Activated CD4-positive, alpha-beta T cell treated with anti-CD3 and anti-CD28 coated beads for 36 hours (primary cell): ENCODE measurements at regions of chr1 and their contacts with region 1.

Region 1: DNA sequence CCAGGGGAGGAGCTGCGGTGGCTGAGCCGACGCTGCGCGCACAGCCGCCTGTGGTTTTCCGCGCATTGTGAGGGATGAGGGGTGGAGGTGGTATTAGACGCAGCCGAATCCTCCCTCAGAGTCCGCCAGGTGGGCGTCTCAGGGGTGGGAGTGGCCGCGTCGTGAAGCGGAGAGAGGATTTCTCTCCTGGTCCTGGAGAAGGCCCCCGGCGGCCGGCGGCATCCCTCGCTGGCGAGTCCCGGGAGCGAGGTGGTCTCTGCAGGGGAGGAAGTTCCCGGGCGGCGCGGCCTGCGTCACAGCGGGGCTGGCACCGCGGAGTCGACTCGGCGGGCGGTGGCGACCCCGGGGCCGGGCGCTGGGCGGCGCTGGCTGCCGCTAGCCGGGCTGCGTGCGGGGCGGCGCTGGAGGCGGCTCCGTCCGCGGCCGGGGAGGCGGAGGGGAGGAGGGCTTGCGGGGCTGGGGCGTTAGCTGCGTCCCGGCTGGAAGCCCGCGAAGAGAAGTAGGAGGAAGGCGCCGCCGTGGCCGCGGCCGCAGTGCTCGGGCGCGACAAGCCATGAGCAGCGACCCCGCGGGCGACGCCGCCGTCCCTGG is at the start of gene LRRC8C:
- DNase-seq: peak; percentile 93
- ATAC-seq: peak; percentile 77
- H3K4me3 Mint-ChIP-seq: peak within 1 kb of the TSS; percentile 96
- H3K27ac Mint-ChIP-seq: peak within 1 kb of the TSS; percentile 98
- H3K4me1 Mint-ChIP-seq: peaks cover 66% of the 10 kb centered on the region
- H3K27me3 Mint-ChIP-seq: no peaks in the 10 kb centered on the region
- total RNA-seq, gene LRRC8C: 31.5 to 37.1 TPM

Region 2: DNA sequence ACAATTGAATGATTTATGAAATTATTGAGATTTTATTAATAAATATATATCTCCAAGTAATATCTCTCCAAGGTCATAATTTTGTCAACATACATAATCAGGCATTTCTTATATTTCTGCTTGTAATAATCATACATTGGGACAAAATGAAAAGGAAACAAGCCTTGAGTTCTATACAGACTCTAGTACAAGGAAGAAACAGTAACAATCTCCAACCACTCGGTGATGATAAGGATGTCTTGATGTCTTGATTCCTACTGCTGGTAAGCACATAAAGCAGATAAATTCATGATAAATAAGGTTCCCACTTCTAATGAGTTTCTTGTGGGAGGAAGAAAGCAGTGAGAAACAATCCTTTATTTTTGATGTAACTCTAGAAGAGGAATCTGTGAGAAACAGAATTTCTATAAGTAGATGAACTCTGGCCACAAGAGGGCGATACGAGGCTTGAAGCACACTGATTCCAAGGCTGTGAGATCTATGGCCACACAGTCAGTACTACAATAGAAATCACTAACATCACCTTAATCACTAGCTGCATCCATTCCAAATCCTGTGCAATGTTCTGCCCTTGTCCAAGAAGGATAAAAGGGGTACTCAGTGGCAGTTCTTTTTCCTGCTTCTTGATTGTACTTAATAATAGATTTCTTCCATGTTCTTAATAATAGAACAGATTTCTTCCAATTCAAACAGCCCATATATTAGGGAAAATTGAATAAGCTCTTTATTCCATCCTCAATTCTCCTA is 149.6 kb before region 1 on chr1:
- CTCF ChIA-PET with region 1: interaction called, 8 read pairs
- POLR2A ChIA-PET with region 1: interaction called, 3 read pairs
- intact Hi-C with region 1: loop called in 1 of 2 experiments (anchors 2 kb)
- DNase-seq: peak; percentile 91
- ATAC-seq: peak; percentile 86
- H3K4me3 Mint-ChIP-seq: no peak overlapping the region
- H3K27ac Mint-ChIP-seq: no peak overlapping the region
- H3K4me1 Mint-ChIP-seq: peaks cover 21% of the 10 kb centered on the region
- H3K27me3 Mint-ChIP-seq: no peaks in the 10 kb centered on the region

Region 3: GRCh38 chr1:89566761-89567174 is 66.0 kb before region 1 on chr1:
- CTCF ChIA-PET with region 1: no interaction called
- POLR2A ChIA-PET with region 1: no interaction called
- intact Hi-C with region 1: no loop called
- DNase-seq: no peak
- ATAC-seq: no peak
- H3K4me3 Mint-ChIP-seq: no peak overlapping the region
- H3K27ac Mint-ChIP-seq: no peak overlapping the region
- H3K4me1 Mint-ChIP-seq: peaks cover 55% of the 10 kb centered on the region
- H3K27me3 Mint-ChIP-seq: no peaks in the 10 kb centered on the region

Region 4: GRCh38 chr1:89605692-89606091 is 27.1 kb before region 1 on chr1:
- CTCF ChIA-PET with region 1: interaction called, 27 read pairs
- POLR2A ChIA-PET with region 1: interaction called, 28 read pairs
- intact Hi-C with region 1: loop called in 1 of 2 experiments (anchors 2 kb)
- DNase-seq: no peak
- ATAC-seq: no peak
- H3K4me3 Mint-ChIP-seq: peak overlapping the region; percentile 62
- H3K27ac Mint-ChIP-seq: peak overlapping the region; percentile 99
- H3K4me1 Mint-ChIP-seq: peaks cover 92% of the 10 kb centered on the region
- H3K27me3 Mint-ChIP-seq: no peaks in the 10 kb centered on the region

Region 5: GRCh38 chr1:89670163-89670562 is 37.4 kb after region 1 on chr1:
- CTCF ChIA-PET with region 1: interaction called, 4 read pairs
- POLR2A ChIA-PET with region 1: interaction called, 5 read pairs
- intact Hi-C with region 1: loop called in 1 of 2 experiments (anchors 5 kb)
- DNase-seq: no peak
- ATAC-seq: peak; percentile 65
- H3K4me3 Mint-ChIP-seq: peak overlapping the region; percentile 36
- H3K27ac Mint-ChIP-seq: peak overlapping the region; percentile 88
- H3K4me1 Mint-ChIP-seq: peaks cover 93% of the 10 kb centered on the region
- H3K27me3 Mint-ChIP-seq: no peaks in the 10 kb centered on the region

Region 6: GRCh38 chr1:89762779-89763648 is 130.3 kb after region 1 on chr1:
- CTCF ChIA-PET with region 1: interaction called, 157 read pairs
- POLR2A ChIA-PET with region 1: interaction called, 13 read pairs
- intact Hi-C with region 1: loop called (anchors 1 kb)
- DNase-seq: peak; percentile 94
- ATAC-seq: peak; percentile 99
- H3K4me3 Mint-ChIP-seq: peak overlapping the region; percentile 68
- H3K27ac Mint-ChIP-seq: peak overlapping the region; percentile 89
- H3K4me1 Mint-ChIP-seq: peaks cover 54% of the 10 kb centered on the region
- H3K27me3 Mint-ChIP-seq: no peaks in the 10 kb centered on the region

Region 7: GRCh38 chr1:89843281-89844121 is 210.7 kb after region 1 on chr1:
- CTCF ChIA-PET with region 1: interaction called, 4 read pairs
- POLR2A ChIA-PET with region 1: no interaction called
- intact Hi-C with region 1: loop called in 1 of 2 experiments (anchors 2 kb)
- DNase-seq: peak; percentile 92
- ATAC-seq: peak; percentile 79
- H3K4me3 Mint-ChIP-seq: peak overlapping the region; percentile 94
- H3K27ac Mint-ChIP-seq: peak overlapping the region; percentile 97
- H3K4me1 Mint-ChIP-seq: peaks cover 59% of the 10 kb centered on the region
- H3K27me3 Mint-ChIP-seq: no peaks in the 10 kb centered on the region